ENCODE measurements at regions of chr3 and their contacts with region 1.

Region 1: GRCh38 chr3:42749753-42750231 is 23.3 kb downstream of the CCDC13 start:
- DNase-seq: peak in 4 of 10 donors; percentile 54 to 91 (median 57)

Region 2: GRCh38 chr3:42502429-42503250 is 247.2 kb before region 1 on chr3 and contains the start of gene VIPR1:
- intact Hi-C with region 1: loop called (anchors 2 kb)
- DNase-seq: peak; percentile 72 to 98 (median 88)

Region 3: GRCh38 chr3:42572278-42572677 is 177.5 kb before region 1 on chr3:
- intact Hi-C with region 1: loop called (anchors 2 kb)
- DNase-seq: peak in 3 of 10 donors; percentile 32 to 89 (median 67)

Region 4: DNA sequence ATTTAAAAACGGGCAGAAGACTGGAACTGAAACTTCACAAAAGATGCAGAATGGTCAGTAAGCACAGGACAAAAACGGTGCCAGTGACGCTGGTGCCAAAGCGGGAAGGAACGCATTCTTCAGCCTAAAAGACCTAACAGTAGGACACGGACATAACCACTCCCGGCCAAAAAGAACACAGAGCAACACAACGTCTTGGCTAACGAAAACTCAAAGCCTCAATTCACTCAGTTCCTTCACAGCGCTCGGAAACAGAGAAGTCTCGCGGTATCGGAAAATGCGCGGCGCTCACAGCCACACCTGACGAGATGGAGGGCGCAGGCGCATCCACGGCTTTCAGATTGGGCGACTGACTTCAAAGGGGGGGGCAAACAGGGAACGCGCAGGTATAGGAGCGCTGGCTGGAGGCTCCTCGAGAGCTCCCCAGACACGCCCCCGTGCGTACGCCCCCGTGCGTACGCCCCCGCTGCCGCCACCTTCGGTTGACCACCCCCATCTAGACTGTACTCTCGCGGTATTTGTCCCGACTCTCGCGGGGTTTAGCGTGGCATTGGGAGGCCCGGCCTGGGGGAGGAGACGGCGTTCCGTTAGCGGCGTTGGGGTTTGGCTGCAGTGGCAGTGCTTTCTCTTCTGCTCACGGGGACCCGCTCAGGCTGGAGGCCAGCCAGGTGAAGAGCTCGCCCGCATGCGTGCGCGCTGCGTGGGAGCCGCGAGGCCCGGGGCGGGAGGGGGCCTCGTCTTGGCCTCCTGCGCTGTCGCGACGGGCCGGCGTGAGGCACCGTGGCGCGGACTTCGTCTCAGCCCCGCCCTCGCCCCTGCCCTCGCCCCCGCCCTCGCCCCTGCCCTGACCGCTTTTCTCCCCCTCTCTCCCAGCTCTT is 149.4 kb before region 1 on chr3 and contains the start of gene NKTR:
- intact Hi-C with region 1: loop called (anchors 5 kb)
- DNase-seq: peak; percentile 85 to 99 (median 94)

Region 5: DNA sequence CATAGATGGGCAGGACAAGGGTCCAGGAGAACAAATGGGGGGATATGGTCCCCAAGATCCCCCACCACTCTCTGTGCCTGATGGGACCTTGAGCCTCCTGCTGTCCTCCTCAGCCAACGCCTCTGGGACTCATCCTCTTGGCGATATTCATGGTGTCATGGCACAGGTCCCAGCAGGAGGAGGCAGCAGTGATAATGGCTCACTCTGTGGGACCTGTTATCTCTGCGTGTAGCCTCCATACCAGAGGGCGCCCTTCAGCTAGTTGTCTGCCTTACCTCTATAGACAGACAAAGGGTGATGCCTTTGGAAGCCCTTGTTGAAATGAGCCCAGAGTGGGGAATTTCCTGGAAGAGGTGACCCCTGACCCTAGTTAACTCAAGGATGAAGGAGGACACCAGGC is 88.9 kb before region 1 on chr3:
- intact Hi-C with region 1: loop called (anchors 5 kb)
- DNase-seq: peak in 3 of 10 donors; percentile 23 to 84 (median 82)

Measured in posterior cingulate gyrus (tissue), 11 donors.